Activated CD4-positive, alpha-beta memory T cell treated with anti-CD3 and anti-CD28 coated beads for 36 hours (primary cell): ENCODE measurements at regions of chr7 and their contacts with region 1.

Region 1: DNA sequence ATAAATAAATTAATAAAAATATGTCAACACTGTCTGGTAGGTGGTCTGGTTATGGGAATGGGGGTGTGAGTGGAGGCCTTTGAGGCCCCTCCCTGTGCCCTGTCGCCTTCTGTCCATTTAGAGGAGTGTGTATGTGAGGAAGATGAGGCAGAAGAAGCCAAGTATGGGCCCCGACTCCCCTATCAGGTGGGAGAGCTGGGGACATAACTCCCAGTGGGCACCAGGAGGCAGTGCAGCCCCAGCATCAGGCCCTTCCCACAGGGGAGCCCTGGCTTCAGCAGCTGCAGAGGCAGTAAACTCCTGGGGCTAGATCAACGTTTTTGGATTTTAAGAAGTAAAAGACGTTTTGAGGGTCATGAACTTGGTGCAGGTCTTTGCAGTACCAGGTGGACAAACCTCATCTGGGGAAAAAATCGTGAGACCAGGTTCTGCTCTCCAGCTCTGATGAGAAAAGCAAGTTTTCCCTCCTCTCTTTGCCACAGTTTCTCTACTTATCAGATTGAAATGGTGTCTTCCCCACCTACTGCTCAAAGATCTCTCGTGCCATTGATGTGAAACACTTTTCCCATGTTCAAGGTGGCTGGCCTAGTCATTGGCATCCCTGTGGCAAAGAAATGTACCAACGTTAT is 167.8 kb upstream of the EEPD1 start:
- DNase-seq: peak; percentile 85
- H3K4me3 Mint-ChIP-seq: no peak overlapping the region
- H3K27ac Mint-ChIP-seq: peak overlapping the region; percentile 15
- H3K4me1 Mint-ChIP-seq: no peaks in the 10 kb centered on the region
- H3K27me3 Mint-ChIP-seq: peaks cover 1% of the 10 kb centered on the region

Region 2: DNA sequence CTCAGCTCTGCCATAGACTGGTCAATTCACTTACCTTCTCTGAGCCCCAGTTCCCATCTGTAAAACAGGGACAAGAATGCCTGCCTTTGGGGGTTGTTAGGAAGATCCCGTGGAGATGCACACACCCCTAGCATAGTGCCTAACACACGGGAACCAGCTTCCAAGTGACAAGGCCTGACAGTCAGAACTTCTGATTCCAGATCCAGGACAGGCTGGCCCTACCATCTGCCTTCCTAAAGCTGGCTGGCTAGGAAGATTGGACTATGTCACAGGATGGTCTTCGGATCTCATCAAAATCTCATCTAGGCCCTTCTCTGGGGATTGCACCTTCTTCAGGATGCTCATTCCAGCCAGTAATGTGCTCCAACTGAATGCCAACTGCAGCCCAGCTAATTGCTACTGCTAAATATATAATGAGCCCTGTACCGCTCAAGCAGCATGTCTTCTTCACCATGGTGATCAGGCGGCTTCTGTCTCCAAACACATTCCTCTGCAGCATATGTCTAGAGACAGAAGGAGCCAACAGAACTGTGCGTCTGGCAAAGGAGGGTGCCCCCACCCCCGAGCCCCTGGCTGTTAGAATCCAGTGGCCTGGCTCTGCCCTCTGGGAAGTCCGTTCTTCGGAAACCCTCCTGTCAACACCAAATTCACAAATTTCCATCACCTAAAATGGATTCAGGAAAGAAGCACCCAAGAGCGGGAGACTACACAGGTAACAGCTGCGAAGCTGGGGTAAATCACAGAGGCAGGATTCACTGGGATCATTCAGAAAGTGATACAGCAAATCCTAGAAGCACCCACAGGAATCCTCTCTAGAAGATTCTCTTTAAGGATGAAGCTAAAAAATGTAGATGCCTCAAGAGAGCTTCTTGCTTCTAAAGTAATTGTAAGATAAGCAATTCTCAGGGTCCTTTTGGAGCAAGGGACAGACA is 25.7 kb after region 1 on chr7:
- CTCF ChIA-PET with region 1: no interaction called
- POLR2A ChIA-PET with region 1: no interaction called
- intact Hi-C with region 1: no loop called
- DNase-seq: no peak
- H3K4me3 Mint-ChIP-seq: no peak overlapping the region
- H3K27ac Mint-ChIP-seq: no peak overlapping the region
- H3K4me1 Mint-ChIP-seq: no peaks in the 10 kb centered on the region
- H3K27me3 Mint-ChIP-seq: no peaks in the 10 kb centered on the region

Region 3: DNA sequence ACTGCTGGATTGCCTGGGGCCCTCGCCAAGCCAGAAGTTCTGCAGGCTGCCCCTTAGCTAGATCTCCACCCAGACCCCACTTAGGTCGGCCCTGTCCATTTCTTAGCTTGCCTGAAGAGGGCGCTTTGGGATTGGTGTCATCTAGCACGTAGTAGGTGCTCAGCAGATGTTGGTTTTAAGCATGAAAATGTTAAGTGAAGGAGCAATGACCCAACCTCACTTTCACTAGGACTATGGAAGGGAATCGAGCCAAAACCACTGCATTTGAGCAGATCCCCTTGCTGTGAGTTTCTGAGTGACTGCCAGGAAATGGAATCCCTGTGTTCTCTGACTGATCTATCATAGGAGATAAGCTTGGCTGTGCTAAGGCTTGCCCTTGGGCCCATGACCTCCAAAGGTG is 36.1 kb after region 1 on chr7:
- CTCF ChIA-PET with region 1: interaction called, 12 read pairs
- POLR2A ChIA-PET with region 1: no interaction called
- intact Hi-C with region 1: no loop called
- DNase-seq: peak; percentile 33
- H3K4me3 Mint-ChIP-seq: no peak overlapping the region
- H3K27ac Mint-ChIP-seq: no peak overlapping the region
- H3K4me1 Mint-ChIP-seq: no peaks in the 10 kb centered on the region
- H3K27me3 Mint-ChIP-seq: no peaks in the 10 kb centered on the region

Region 4: GRCh38 chr7:36048902-36049240 is 63.6 kb after region 1 on chr7:
- CTCF ChIA-PET with region 1: interaction called, 11 read pairs
- POLR2A ChIA-PET with region 1: no interaction called
- intact Hi-C with region 1: no loop called
- DNase-seq: no peak
- H3K4me3 Mint-ChIP-seq: no peak overlapping the region
- H3K27ac Mint-ChIP-seq: no peak overlapping the region
- H3K4me1 Mint-ChIP-seq: no peaks in the 10 kb centered on the region
- H3K27me3 Mint-ChIP-seq: no peaks in the 10 kb centered on the region

Region 5: DNA sequence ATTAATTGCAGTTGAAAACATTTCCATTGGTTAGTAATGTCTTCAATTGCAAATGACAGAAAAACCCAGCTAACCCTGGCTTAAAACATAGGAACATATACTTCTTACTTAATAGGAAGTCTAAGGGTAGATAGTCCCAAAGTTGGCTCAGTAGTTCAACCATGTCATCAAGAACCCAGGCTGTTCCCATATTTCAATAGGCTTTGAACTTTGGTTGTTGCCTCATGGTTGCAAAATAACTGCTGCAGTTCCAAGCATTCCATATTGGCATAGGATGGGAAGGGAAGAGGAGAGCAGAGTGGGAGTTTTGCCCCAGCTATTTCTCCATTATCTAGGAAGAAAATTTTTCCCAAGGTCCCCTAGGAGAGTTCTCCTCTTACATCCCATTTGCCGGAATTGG is 86.4 kb after region 1 on chr7:
- CTCF ChIA-PET with region 1: no interaction called
- POLR2A ChIA-PET with region 1: no interaction called
- intact Hi-C with region 1: no loop called
- DNase-seq: no peak
- H3K4me3 Mint-ChIP-seq: no peak overlapping the region
- H3K27ac Mint-ChIP-seq: no peak overlapping the region
- H3K4me1 Mint-ChIP-seq: no peaks in the 10 kb centered on the region
- H3K27me3 Mint-ChIP-seq: no peaks in the 10 kb centered on the region

Region 6: GRCh38 chr7:36280840-36281812 is 295.9 kb after region 1 on chr7:
- CTCF ChIA-PET with region 1: interaction called, 14 read pairs
- POLR2A ChIA-PET with region 1: interaction called, 3 read pairs
- intact Hi-C with region 1: no loop called
- DNase-seq: peak; percentile 53
- H3K4me3 Mint-ChIP-seq: no peak overlapping the region
- H3K27ac Mint-ChIP-seq: no peak overlapping the region
- H3K4me1 Mint-ChIP-seq: peaks cover 38% of the 10 kb centered on the region
- H3K27me3 Mint-ChIP-seq: no peaks in the 10 kb centered on the region

Region 7: GRCh38 chr7:36291387-36292316 is 306.4 kb after region 1 on chr7:
- CTCF ChIA-PET with region 1: interaction called, 124 read pairs
- POLR2A ChIA-PET with region 1: no interaction called
- intact Hi-C with region 1: loop called (anchors 1 kb)
- DNase-seq: peak; percentile 80
- H3K4me3 Mint-ChIP-seq: peak overlapping the region; percentile 64
- H3K27ac Mint-ChIP-seq: no peak overlapping the region
- H3K4me1 Mint-ChIP-seq: peaks cover 39% of the 10 kb centered on the region
- H3K27me3 Mint-ChIP-seq: no peaks in the 10 kb centered on the region

Region 8: DNA sequence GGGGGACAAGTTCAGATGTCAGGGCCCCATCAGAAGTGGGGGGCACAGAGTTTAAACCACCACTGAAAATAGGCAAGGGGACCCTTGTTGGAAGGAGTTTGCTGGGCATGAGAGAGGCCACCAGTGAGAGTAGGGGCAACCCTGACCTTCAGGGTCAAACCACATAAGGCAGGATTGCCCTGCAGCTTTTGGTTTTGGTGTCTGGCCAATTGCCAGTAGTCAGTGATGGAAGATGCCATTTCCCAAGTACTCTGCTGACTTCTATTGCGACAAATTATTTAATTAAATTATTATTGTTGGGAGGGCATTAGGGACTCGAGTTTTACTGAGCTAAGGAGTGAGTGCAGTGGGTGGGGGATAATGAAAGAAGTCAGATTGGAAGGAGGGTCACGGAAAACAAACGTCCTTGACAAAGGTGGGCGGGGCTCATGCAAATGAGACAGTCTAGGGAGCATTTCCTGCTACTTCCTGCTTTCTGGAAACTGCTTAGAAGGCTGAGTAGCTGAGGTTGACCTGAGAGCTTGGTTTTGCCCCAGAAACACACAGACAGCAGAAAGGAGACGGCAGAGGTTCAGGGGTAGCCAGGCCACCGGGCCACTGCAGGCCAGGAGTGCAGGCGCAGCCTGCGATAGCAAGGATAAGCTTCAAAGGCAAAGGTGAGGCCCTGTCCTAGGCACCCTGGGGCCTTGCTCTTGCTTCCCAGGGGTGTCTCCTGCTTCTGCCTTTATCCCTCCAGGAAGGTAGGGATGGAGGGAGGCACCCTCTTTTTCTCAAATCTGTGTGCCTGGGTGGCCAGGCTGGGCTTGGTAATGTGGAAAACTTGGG is 330.3 kb after region 1 on chr7:
- CTCF ChIA-PET with region 1: interaction called, 47 read pairs
- POLR2A ChIA-PET with region 1: no interaction called
- intact Hi-C with region 1: loop called (anchors 1 kb)
- DNase-seq: no peak
- H3K4me3 Mint-ChIP-seq: no peak overlapping the region
- H3K27ac Mint-ChIP-seq: no peak overlapping the region
- H3K4me1 Mint-ChIP-seq: no peaks in the 10 kb centered on the region
- H3K27me3 Mint-ChIP-seq: no peaks in the 10 kb centered on the region

Region 9: GRCh38 chr7:36366718-36367560 is 381.7 kb after region 1 on chr7:
- CTCF ChIA-PET with region 1: interaction called, 3 read pairs
- POLR2A ChIA-PET with region 1: no interaction called
- intact Hi-C with region 1: loop called (anchors 1 kb)
- DNase-seq: peak; percentile 94
- H3K4me3 Mint-ChIP-seq: peak overlapping the region; percentile 88
- H3K27ac Mint-ChIP-seq: no peak overlapping the region
- H3K4me1 Mint-ChIP-seq: no peaks in the 10 kb centered on the region
- H3K27me3 Mint-ChIP-seq: peaks cover 2% of the 10 kb centered on the region